ENCODE measurements at regions of chr18 and their contacts with region 1.

Region 1: DNA sequence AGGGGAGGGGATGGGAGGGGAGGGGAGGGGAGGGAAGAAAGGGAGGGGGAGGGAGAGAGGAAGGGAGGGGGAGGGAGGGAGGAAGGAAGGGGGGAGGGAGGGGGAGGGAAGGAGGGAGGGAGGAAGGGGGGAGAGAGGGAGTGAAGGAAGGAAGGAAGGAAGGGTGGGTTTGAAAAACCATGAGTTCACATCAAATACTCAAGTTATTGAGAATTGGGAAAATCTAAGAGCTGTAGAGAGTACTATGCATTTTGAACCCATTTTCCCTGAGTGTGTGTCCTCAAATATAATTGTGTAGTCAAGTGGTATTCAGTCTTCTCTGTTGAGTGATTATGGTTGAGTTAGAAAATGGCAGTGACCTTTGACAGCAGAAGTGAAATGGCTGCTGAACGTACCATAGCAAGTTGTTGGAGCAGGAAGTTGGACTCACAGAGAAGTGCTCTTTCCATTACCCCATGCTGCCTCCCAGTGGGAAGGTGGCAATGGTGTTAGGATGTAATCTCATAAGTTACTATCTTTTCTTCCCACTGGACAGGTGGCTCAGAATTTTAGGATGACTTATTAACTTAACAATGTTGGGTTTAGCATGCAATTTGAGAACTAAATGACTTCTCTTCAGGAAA is 214.6 kb downstream of the SETBP1 start:
- DNase-seq: peak; percentile 71
- H3K4me3 Mint-ChIP-seq: no peak overlapping the region
- H3K27ac Mint-ChIP-seq: no peak overlapping the region
- H3K4me1 Mint-ChIP-seq: peaks cover 24% of the 10 kb centered on the region
- H3K27me3 Mint-ChIP-seq: no peaks in the 10 kb centered on the region

Region 2: GRCh38 chr18:44579028-44579702 is 316.1 kb before region 1 on chr18:
- CTCF ChIA-PET with region 1: no interaction called
- intact Hi-C with region 1: loop called (anchors 2 kb)
- DNase-seq: no peak
- H3K4me3 Mint-ChIP-seq: no peak overlapping the region
- H3K27ac Mint-ChIP-seq: no peak overlapping the region
- H3K4me1 Mint-ChIP-seq: no peaks in the 10 kb centered on the region
- H3K27me3 Mint-ChIP-seq: no peaks in the 10 kb centered on the region

Region 3: GRCh38 chr18:45119876-45120275 is 224.6 kb after region 1 on chr18:
- CTCF ChIA-PET with region 1: no interaction called
- intact Hi-C with region 1: no loop called
- DNase-seq: no peak
- H3K4me3 Mint-ChIP-seq: no peak overlapping the region
- H3K27ac Mint-ChIP-seq: no peak overlapping the region
- H3K4me1 Mint-ChIP-seq: no peaks in the 10 kb centered on the region
- H3K27me3 Mint-ChIP-seq: no peaks in the 10 kb centered on the region

Region 4: DNA sequence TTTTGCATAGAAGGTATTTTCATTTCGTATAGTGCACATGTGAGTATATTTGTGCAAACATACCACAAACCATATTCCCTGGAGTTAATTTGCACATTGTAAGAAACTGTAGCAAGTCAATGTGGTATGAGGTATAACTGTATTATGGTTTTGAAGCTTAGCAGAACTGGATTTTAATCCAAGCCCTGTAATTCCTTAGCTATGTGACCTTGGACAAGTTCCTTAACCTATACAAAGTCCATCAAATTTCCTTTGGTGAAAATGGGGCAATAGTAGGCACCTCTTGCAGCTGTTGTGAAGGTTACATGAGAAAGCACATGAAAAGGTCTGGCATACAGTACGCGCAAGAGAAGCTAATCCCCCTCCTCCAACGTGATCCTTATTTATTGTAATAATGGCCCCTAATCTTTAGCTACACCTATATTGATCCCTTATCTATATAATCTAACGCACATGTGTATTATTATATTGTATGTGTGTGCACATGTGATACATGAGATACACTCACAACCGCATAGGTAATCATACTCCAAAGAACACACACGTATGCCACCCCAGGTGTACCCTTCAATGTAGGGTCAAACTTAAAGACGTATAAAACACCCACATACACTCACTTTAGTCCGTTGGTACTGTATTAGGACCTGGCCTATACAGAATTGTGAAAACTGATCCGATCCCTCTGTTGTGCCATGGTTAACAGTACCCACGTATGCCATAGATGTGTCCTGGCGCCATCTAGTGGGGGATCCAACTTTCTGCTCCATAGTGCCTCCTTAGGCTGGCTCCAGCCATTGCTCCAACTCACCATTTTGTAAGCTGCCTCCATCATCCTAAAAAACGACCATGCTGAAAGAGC is 317.1 kb after region 1 on chr18:
- CTCF ChIA-PET with region 1: interaction called, 4 read pairs
- intact Hi-C with region 1: loop called (anchors 5 kb)
- DNase-seq: peak; percentile 84
- H3K4me3 Mint-ChIP-seq: no peak overlapping the region
- H3K27ac Mint-ChIP-seq: no peak overlapping the region
- H3K4me1 Mint-ChIP-seq: no peaks in the 10 kb centered on the region
- H3K27me3 Mint-ChIP-seq: no peaks in the 10 kb centered on the region

Region 5: DNA sequence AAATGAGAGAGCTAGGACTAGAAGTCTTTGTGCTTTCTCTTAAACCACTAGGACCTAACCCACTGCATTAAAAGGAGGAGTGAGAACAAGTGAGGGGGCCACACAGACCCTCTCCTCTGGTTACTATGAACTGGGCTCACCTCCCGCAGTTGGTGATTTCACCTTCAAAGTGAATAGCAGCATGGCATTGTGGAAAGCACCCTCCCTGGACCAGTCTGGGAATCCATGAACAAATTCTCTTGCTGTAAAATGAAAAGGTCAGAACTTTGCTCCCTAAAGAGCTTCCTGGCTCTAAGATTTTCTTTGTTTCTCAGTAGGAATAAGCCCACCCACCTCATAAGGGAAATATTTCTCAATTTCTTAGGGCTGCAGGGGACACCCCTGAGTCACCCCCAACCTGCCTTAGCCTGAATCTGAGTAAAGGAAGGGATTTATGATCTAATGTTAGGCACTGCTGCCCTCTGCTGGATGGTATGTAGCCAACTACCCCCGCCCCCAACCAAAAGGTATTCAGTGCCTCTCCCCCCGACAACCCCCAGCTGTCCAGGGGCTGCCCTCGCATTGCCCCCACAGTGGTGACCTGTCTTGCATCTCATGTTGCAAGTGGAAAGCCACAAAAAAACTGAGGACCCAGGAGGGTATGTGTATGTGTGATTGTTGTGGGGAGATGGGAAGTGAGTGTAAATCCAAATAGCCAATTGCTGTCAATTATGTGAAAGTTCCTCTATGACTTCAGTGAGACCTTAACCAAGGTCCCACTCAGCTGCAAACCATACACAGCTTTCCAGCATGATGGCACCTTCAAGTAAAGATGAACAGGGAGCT is 489.1 kb after region 1 on chr18:
- CTCF ChIA-PET with region 1: no interaction called
- intact Hi-C with region 1: loop called (anchors 5 kb)
- DNase-seq: peak; percentile 59
- H3K4me3 Mint-ChIP-seq: no peak overlapping the region
- H3K27ac Mint-ChIP-seq: no peak overlapping the region
- H3K4me1 Mint-ChIP-seq: no peaks in the 10 kb centered on the region
- H3K27me3 Mint-ChIP-seq: peaks cover 23% of the 10 kb centered on the region

Measured in activated naive CD4-positive, alpha-beta T cell treated with anti-CD3 and anti-CD28 coated beads for 36 hours (primary cell).